Endothelial cell of umbilical vein (primary cell): ENCODE measurements at regions of chr20 and their contacts with region 1.

Region 1: DNA sequence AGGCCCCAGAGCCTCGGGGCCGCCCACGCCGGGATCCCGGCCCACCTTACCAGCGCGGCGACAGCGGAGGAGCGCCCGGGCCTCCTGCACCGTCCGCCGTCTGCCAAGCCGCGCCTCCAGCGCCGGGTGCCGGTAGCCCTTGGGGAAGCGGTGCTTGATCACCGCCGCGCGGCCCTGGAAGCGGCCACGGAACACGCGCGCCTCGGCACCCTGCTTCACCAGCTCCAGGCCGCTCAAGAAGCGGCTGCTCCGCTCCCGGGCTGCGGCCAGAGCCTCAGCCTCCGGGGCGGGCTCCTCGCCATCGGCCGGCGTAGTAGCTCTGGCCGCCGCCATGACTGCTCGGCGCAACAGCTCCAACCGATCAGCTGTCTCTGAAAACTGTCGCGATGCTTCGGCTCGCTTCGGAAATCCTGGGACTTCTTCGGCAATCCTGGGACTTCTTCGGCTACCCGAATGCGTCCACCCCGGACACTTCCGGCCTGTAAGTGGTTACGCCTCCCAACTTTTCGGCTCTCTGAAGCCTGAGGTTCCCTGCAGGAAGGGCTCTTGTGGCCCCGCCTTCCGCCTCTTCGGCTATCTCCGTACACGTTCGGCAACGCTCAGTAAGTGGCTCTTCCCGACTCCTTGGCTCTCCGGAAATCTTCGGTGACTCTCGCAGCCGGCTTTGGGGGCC is at the start of gene TP53RK:
- DNase-seq: peak; percentile 100
- H3K4me3 ChIP-seq: peak within 1 kb of the TSS; percentile 62 to 91 (median 90)
- H3K27ac ChIP-seq: peak within 1 kb of the TSS; percentile 55
- H3K4me1 ChIP-seq: peaks cover 16% of the 10 kb centered on the region
- H3K27me3 ChIP-seq: no peaks in the 10 kb centered on the region
- CTCF ChIP-seq: peak; percentile 7 to 33
- POLR2A ChIP-seq: peak; percentile 92
- total RNA-seq, gene TP53RK: 11.8 and 13.1 TPM in 2 replicates

Region 2: GRCh38 chr20:46406199-46406985 is 282.8 kb before region 1 on chr20 and contains the start of gene ELMO2:
- CTCF ChIA-PET with region 1: no interaction called
- POLR2A ChIA-PET with region 1: no interaction called
- dilution Hi-C with region 1: no loop called
- intact Hi-C with region 1: loop called (anchors 2 kb)
- DNase-seq: peak; percentile 97
- H3K4me3 ChIP-seq: peak within 1 kb of the TSS; percentile 69 to 81 (median 75)
- H3K27ac ChIP-seq: peak within 1 kb of the TSS; percentile 36
- H3K4me1 ChIP-seq: peaks cover 17% of the 10 kb centered on the region
- H3K27me3 ChIP-seq: peaks cover 2 to 6% of the 10 kb centered on the region in 2 experiments
- CTCF ChIP-seq: peak in 1 of 2 donors; percentile 9
- POLR2A ChIP-seq: no peak
- total RNA-seq, gene ELMO2: 42.1 and 43.5 TPM in 2 replicates

Region 3: GRCh38 chr20:46572153-46572552 is 117.1 kb before region 1 on chr20:
- CTCF ChIA-PET with region 1: no interaction called
- POLR2A ChIA-PET with region 1: no interaction called
- dilution Hi-C with region 1: no loop called
- intact Hi-C with region 1: no loop called
- DNase-seq: peak; percentile 55
- H3K4me3 ChIP-seq: no peak overlapping the region
- H3K27ac ChIP-seq: no peak overlapping the region
- H3K4me1 ChIP-seq: peaks cover 3% of the 10 kb centered on the region
- H3K27me3 ChIP-seq: no peaks in the 10 kb centered on the region
- CTCF ChIP-seq: no peak
- POLR2A ChIP-seq: no peak

Region 4: GRCh38 chr20:46709459-46710152 is 20.4 kb after region 1 on chr20 and contains the start of gene SLC2A10:
- CTCF ChIA-PET with region 1: interaction called, 6 read pairs
- POLR2A ChIA-PET with region 1: interaction called, 3 read pairs
- dilution Hi-C with region 1: no loop called
- intact Hi-C with region 1: loop called (anchors 1 kb)
- DNase-seq: peak; percentile 49
- H3K4me3 ChIP-seq: peak within 1 kb of the TSS; percentile 73 to 82 (median 77)
- H3K27ac ChIP-seq: peak within 1 kb of the TSS; percentile 3
- H3K4me1 ChIP-seq: peaks cover 9% of the 10 kb centered on the region
- H3K27me3 ChIP-seq: peaks cover 4 to 6% of the 10 kb centered on the region in 2 experiments
- CTCF ChIP-seq: no peak
- POLR2A ChIP-seq: no peak
- total RNA-seq, gene SLC2A10: 11.1 and 11.2 TPM in 2 replicates